ENCODE measurements at regions of chr9 and their contacts with region 1.

Region 1: GRCh38 chr9:133149126-133150107 is 14.3 kb downstream of the GBGT1 start:
- DNase-seq: peak; percentile 95
- CTCF ChIP-seq: peak; percentile 29

Region 2: GRCh38 chr9:133042676-133043075 is 106.7 kb before region 1 on chr9:
- CTCF ChIA-PET with region 1: interaction called, 16 read pairs
- POLR2A ChIA-PET with region 1: no interaction called
- DNase-seq: no peak
- CTCF ChIP-seq: no peak

Region 3: DNA sequence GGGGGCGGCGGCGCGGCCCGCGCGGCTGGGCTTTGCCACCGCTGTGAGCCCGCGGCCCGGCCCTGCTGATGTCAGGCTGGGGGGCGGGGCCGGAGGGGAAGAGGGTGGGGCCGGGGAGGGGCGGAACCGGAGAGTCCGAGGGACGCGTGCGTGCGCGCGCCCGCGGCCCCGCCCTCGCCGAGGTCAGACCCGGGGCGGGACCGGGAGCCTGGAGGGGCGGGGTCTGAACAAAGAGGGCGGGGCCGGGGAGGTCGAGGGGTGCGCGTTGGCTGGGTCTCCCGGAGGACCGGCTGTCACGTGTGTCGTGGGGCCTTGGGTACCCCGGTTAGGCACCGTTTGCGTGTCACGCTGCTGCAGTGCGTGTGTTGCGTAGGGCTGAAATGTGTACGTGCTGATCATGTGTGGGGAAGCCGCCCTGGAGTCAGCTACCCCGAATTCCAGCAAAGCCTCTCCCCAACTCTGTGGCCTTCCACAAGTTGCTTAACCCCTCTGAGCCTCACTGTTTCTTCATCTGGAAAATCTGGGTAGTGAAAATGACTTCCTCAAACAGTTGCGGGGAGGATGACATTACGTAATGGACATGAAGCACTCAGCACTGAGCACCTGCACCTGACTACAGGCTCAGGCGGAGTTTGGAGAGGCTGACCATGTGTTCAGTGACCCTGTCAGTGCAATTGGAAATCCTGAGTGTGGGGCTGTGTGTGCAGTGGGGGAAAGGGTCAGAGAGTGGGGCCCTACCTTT is 28.0 kb before region 1 on chr9 and contains the start of gene RALGDS:
- CTCF ChIA-PET with region 1: interaction called, 473 read pairs
- POLR2A ChIA-PET with region 1: interaction called, 7 read pairs
- DNase-seq: peak; percentile 97
- CTCF ChIP-seq: no peak

Region 4: GRCh38 chr9:133160742-133161546 is 11.5 kb after region 1 on chr9:
- CTCF ChIA-PET with region 1: interaction called, 94 read pairs
- POLR2A ChIA-PET with region 1: no interaction called
- DNase-seq: peak; percentile 80
- CTCF ChIP-seq: peak; percentile 69

Measured in GM10248 (cell line).